K562 (cell line): ENCODE measurements at regions of chr4 and their contacts with region 1.

Region 1: GRCh38 chr4:171846232-171846631 is 33.0 kb downstream of the GALNTL6 start:
- DNase-seq: peak; percentile 17 to 55 (median 23)
- ATAC-seq: peak; percentile 65
- H3K4me3 ChIP-seq: no peak overlapping the region
- H3K27ac ChIP-seq: no peak overlapping the region
- H3K4me1 ChIP-seq: no peaks in the 10 kb centered on the region
- H3K27me3 ChIP-seq: no peaks in the 10 kb centered on the region
- CTCF ChIP-seq: peak; percentile 42 to 53 (median 49); a peak in 5 of 6 replicates
- EP300 ChIP-seq: no peak
- POLR2A ChIP-seq: no peak
- RAD21 ChIP-seq: peak; percentile 48 to 52

Region 2: DNA sequence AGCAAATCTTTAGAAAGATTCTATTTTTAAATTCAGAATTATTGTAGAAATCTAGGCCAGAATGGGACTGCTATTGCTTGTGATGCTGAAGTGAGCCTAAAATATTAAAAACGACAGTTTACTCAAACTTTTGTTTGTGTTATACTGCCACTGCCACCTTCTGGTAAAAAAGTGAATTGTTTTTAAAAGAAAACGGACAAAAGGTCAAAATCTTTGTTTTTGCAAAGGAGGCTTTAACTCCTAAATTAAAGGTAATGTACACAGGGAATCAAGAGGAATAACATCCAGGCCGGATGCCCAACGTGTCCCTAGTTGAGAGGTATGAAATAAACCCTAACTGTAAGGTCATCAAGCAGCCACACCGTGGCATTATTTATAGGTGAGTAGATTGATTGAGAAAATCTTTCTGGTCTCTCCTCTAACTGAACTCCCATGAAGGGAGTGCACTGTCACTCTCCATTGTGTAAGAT is 984.1 kb after region 1 on chr4:
- CTCF ChIA-PET with region 1: no interaction called
- POLR2A ChIA-PET with region 1: no interaction called
- in situ Hi-C with region 1: no loop called
- intact Hi-C with region 1: loop called (anchors 10 kb)
- DNase-seq: peak; percentile 16 to 50 (median 30)
- ATAC-seq: no peak
- H3K4me3 ChIP-seq: no peak overlapping the region
- H3K27ac ChIP-seq: no peak overlapping the region
- H3K4me1 ChIP-seq: no peaks in the 10 kb centered on the region
- H3K27me3 ChIP-seq: peaks cover 0 to 10% of the 10 kb centered on the region in 2 experiments; a peak in 1 of 5 replicates
- CTCF ChIP-seq: peak; percentile 3 to 53 (median 31); a peak in 2 of 6 replicates
- EP300 ChIP-seq: no peak
- POLR2A ChIP-seq: no peak
- RAD21 ChIP-seq: peak; percentile 52 to 56